CD8-positive, alpha-beta T cell (primary cell): ENCODE measurements at regions of chr9 and their contacts with region 1.

Region 1: GRCh38 chr9:75397836-75398235 is 309.5 kb downstream of the OSTF1 start:
- DNase-seq: no peak
- ATAC-seq: no peak
- H3K4me3 ChIP-seq: no peak overlapping the region
- H3K4me3 Mint-ChIP-seq: no peak overlapping the region
- H3K27ac ChIP-seq: no peak overlapping the region
- H3K27ac Mint-ChIP-seq: no peak overlapping the region
- H3K4me1 ChIP-seq: no peaks in the 10 kb centered on the region
- H3K4me1 Mint-ChIP-seq: no peaks in the 10 kb centered on the region
- H3K27me3 ChIP-seq: no peaks in the 10 kb centered on the region
- H3K27me3 Mint-ChIP-seq: peaks cover 5% of the 10 kb centered on the region
- CTCF ChIP-seq: no peak

Region 2: DNA sequence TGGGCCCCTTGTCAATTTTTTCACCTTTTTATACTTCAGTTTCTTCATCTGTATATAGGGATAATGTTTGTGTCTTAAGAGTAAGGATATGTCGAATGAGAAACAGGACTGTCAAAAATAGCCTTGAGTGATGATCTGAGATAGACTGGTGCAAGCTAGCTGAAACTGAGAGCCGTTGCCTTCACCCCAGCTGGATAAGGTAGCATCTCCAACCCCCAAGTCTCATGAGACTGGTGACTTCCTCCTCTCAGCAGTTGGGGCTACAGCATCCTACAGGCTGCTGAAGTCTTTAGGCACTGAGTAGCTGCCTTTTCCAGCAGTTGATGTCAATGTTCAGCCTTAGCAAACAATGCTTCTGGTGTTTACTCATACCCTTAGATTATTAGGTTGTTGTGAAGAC is 20.7 kb after region 1 on chr9:
- CTCF ChIA-PET with region 1: no interaction called
- POLR2A ChIA-PET with region 1: no interaction called
- intact Hi-C with region 1: loop called in 1 of 2 experiments (anchors 2 kb)
- DNase-seq: no peak
- ATAC-seq: no peak
- H3K4me3 ChIP-seq: no peak overlapping the region
- H3K4me3 Mint-ChIP-seq: no peak overlapping the region
- H3K27ac ChIP-seq: no peak overlapping the region
- H3K27ac Mint-ChIP-seq: no peak overlapping the region
- H3K4me1 ChIP-seq: no peaks in the 10 kb centered on the region
- H3K4me1 Mint-ChIP-seq: no peaks in the 10 kb centered on the region
- H3K27me3 ChIP-seq: no peaks in the 10 kb centered on the region
- H3K27me3 Mint-ChIP-seq: no peaks in the 10 kb centered on the region
- CTCF ChIP-seq: no peak